ENCODE measurements at regions of chr6 and their contacts with region 1.

Region 1: DNA sequence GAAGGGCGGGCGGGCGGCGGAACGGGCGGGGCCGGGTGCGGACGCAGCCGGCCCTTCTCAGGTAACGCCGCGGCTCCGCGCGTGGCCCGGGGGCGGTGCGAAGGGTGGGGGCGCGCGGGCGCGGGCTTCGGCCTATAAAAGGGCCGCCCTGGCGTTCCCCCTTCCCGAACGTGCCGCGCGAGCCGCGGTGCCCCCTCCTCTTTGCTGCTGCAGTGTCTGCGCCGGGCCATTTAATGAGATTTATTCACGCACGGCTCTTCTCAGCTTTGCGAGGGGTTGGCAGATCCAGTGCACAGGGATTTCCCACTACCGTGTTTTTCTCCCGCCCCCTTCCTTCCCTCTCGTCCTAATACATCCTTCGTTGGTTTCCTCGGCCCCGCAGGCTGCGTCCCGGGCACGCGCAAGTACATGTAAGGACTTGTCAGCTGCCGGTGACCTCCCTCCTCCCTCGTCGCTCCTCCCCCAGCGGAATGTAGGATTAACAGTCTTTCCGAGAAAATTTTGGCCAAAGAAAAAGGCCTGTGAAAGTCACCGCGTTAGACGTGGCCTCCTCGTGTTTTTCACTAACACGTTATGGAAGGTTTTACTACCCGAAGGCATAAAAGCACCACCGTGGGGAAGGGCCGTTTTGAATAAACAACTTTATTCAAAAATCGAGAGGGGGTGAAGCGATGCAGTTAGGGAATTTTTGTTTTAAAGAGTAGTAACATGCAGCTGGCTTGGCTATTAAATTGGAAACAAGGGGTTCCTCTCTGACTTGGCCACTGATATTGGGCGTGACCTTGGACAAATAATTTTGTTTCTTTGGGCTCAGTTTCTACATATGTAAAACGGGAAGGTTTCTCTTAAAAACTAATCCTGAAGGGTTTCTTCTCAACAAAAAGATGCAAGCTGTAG is 966 bp upstream of the REV3L start:
- DNase-seq: peak; percentile 94 to 97 (median 95)
- ATAC-seq: peak; percentile 80 to 89 (median 88)
- H3K4me3 ChIP-seq: peak overlapping the region; percentile 75 to 99 (median 92)
- H3K27ac ChIP-seq: peak overlapping the region; percentile 96 to 100 (median 99)
- H3K4me1 ChIP-seq: peaks cover 0 to 58% (median 32%) of the 10 kb centered on the region in 12 donors
- H3K27me3 ChIP-seq: no peaks in the 10 kb centered on the region
- CTCF ChIP-seq: no peak
- POLR2A ChIP-seq: peak in 1 of 2 donors; percentile 79

Region 2: DNA sequence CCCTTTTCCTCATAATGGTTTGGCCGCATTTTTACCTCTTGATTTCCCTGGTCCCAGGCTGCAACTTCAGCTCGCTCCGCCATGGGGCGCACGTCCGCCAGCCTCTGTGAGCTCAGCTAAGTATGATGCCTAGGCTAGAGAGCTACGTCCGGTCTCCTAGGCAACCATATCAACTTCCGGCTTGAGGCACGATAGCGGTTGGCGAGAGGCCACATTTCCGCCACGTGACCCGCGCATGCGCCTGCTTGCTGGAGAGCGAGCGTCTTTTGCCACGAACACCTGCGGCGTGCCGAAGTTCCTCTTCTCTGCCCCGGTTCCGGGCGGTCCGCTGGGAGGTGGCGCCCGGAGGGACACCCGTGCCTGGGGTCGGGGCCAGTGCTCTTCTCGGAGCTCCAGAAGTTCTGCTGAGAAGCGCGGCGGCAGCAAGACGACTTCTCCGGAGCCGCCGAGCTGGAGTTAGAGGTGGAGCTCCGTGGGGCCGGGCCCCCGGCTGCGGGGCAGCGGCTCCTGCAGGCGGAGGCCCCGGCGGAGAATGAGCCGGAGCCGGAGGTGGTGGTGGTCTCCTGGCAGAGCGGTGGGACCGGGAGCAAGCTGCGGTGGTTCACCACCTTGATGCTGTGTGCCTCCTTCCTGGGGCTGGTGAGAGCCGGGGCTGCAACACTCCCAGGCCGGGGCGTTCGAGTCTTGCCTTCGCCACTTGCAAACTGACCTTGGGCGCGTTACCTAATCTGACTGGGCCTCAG is 224.7 kb before region 1 on chr6:
- intact Hi-C with region 1: loop called in 4 of 10 experiments (anchors 1 to 5 kb)
- DNase-seq: peak; percentile 98 to 99 (median 99)
- ATAC-seq: peak; percentile 98 to 99 (median 99)
- H3K4me3 ChIP-seq: peak overlapping the region; percentile 50 to 94 (median 68)
- H3K27ac ChIP-seq: peak overlapping the region; percentile 33 to 94 (median 82)
- H3K4me1 ChIP-seq: peaks cover 0 to 22% (median 13%) of the 10 kb centered on the region in 12 donors
- H3K27me3 ChIP-seq: peaks cover 0 to 9% (median 0%) of the 10 kb centered on the region in 9 donors
- CTCF ChIP-seq: peak; percentile 90 to 99 (median 95)
- POLR2A ChIP-seq: peak in 1 of 2 donors; percentile 61

Region 3: DNA sequence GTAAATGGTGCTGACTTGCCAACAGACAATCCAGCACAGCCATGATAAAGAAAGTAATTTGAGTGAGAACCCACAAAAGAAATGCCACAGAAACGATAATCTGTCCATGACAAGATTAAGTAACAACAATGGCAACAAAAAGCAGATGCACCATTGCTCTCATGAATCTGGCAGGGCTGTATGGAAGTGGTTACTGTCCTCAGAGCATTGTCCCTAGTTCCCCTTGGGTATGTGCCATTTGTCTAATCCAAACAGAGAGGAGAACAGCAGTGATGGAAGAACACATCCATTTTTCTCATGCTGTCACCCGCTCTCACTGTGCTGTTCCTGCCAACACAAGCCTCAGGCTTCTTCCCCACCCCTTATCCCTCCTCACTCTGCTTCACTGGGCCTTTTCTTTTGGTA is 66.8 kb before region 1 on chr6:
- intact Hi-C with region 1: loop called in 2 of 10 experiments (anchors 5 to 10 kb)
- DNase-seq: peak in 4 of 5 donors; percentile 31 to 40 (median 35)
- ATAC-seq: peak; percentile 88 to 95 (median 92)
- H3K4me3 ChIP-seq: no peak overlapping the region
- H3K27ac ChIP-seq: peak overlapping the region in 6 of 12 donors; percentile 0 to 29 (median 6)
- H3K4me1 ChIP-seq: peaks cover 0 to 36% (median 27%) of the 10 kb centered on the region in 12 donors
- H3K27me3 ChIP-seq: no peaks in the 10 kb centered on the region
- CTCF ChIP-seq: no peak
- POLR2A ChIP-seq: no peak

Region 4: DNA sequence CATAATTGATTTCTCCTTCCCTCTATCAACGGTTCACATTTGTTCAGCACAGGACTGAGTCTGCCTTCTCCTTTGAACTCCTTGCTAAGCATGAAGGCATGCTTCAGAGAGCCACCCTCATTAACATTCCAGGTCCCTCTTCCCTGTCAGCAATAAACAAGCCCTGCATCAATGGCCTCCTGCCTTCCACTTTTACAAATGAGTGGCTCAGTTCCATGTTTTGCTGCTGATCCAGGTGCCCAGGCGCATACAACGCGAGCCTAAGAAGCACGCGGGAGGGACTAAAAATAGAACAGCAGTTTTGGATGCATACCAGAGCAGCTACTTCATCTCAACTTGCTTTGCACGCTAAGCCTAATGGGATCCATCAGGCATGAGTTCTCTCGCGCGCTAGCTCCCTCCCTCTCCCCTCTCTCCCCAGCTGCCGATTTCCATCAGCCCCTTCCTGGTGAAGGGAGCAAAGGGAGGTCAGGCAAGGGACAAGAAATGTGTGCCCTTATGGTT is 68.3 kb after region 1 on chr6:
- intact Hi-C with region 1: loop called in 5 of 10 experiments (anchors 5 to 10 kb)
- DNase-seq: peak in 4 of 5 donors; percentile 70 to 78 (median 76)
- ATAC-seq: peak; percentile 90 to 95 (median 94)
- H3K4me3 ChIP-seq: peak overlapping the region in 2 of 12 donors; percentile 11 to 14
- H3K27ac ChIP-seq: peak overlapping the region; percentile 8 to 82 (median 68)
- H3K4me1 ChIP-seq: peaks cover 8 to 43% (median 30%) of the 10 kb centered on the region in 12 donors
- H3K27me3 ChIP-seq: no peaks in the 10 kb centered on the region
- CTCF ChIP-seq: no peak
- POLR2A ChIP-seq: no peak

Region 5: GRCh38 chr6:111605100-111605751 is 121.2 kb after region 1 on chr6:
- intact Hi-C with region 1: loop called (anchors 1 to 10 kb)
- DNase-seq: peak; percentile 73 to 83 (median 79)
- ATAC-seq: peak; percentile 52 to 64 (median 62)
- H3K4me3 ChIP-seq: peak overlapping the region; percentile 41 to 88 (median 63)
- H3K27ac ChIP-seq: peak overlapping the region; percentile 91 to 99 (median 95)
- H3K4me1 ChIP-seq: peaks cover 11 to 61% (median 50%) of the 10 kb centered on the region in 12 donors
- H3K27me3 ChIP-seq: no peaks in the 10 kb centered on the region
- CTCF ChIP-seq: no peak
- POLR2A ChIP-seq: no peak

Measured in heart left ventricle (tissue), 16 donors.